HEK293 (cell line): ENCODE measurements at regions of chr6 and their contacts with region 1.

Region 1: DNA sequence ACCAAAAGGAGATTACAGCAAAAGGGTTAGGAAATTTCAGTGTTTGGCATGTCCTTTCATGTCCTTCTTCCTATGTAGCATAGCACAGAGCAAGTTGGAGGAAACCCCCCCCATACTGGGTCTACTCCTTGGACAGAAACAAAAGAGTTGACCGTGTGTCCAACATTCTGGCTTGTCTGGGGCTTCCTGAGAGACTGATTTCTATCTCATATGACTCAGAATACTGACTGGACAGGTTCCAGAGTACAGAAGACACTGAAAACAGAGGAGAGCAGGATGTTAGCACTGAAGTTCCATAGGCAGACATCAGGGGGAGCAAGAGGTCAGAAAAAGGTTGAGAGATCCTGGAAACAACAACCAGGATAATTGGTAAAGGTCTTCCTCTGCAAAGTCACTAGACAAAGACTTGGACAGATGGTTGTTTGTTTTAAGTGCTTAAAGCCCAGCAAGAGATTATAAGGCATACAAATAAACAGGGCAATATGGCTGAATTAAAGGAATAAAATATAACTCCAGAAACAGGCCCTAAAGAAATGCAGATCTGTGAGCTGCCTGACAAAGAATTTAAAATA is 48.4 kb downstream of the USP49 start:
- H3K4me3 ChIP-seq: no peak overlapping the region
- H3K27ac ChIP-seq: peak overlapping the region; percentile 32
- H3K4me1 ChIP-seq: no peaks in the 10 kb centered on the region
- CTCF ChIP-seq: peak; percentile 62

Region 2: DNA sequence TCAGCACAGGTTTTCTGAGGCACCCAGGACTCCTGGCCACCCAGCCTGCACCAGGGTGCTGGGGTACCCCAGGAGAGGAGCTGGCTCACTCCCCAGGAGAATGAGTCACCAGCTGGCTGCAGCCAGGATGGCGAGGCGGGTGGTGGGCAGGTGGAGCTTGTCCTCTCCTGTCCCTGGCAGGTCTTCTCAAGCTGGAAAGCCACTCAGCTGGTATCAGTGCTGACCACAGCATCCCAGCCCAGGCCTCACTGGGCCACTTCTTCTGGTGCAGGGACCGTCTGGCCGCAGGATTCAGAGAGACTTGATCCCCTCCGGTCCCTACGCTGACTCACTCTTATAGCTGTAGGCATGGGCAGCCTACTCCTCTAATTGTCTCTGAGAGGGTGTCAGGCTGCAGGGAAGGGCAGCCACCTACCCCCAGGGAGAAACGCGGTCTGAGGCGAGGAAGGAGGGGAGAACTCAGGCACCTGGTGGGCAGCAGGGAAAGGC is 133.5 kb before region 1 on chr6:
- CTCF ChIA-PET with region 1: no interaction called
- POLR2A ChIA-PET with region 1: no interaction called
- H3K4me3 ChIP-seq: no peak overlapping the region
- H3K27ac ChIP-seq: no peak overlapping the region
- H3K4me1 ChIP-seq: peaks cover 3% of the 10 kb centered on the region; the same call in 1 of the 2 replicates
- CTCF ChIP-seq: no peak

Region 3: DNA sequence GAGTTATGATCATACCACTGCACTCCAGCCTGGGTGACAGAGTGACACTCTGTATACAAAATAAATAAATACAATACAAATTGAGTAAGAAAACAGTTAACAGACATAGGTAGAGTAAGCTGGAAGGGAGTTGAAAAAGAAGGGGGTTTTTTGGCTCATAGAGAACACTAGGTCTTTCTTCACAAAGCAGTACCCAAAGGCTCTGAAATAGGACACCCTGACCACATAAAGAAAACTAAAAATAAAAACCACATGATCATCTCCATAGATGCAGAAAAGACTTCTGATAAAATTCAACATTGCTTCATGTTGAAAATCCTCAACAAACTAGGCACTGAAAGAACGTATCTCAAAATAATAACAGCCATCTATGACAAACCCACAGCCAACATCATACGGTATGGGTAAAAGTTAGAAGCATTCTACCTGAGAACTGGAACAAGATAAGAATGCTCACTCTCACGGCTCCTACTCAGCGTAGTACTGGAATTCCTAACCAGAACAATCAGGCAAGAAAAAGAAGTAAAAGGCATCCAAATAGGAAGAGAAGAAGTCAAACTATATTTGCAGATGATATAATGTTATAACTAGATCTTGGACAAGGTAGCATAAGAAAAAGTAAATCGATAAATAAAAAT is 10.6 kb before region 1 on chr6:
- CTCF ChIA-PET with region 1: interaction called, 13 read pairs
- POLR2A ChIA-PET with region 1: no interaction called
- H3K4me3 ChIP-seq: no peak overlapping the region
- H3K27ac ChIP-seq: no peak overlapping the region
- H3K4me1 ChIP-seq: no peaks in the 10 kb centered on the region
- CTCF ChIP-seq: no peak

Region 4: DNA sequence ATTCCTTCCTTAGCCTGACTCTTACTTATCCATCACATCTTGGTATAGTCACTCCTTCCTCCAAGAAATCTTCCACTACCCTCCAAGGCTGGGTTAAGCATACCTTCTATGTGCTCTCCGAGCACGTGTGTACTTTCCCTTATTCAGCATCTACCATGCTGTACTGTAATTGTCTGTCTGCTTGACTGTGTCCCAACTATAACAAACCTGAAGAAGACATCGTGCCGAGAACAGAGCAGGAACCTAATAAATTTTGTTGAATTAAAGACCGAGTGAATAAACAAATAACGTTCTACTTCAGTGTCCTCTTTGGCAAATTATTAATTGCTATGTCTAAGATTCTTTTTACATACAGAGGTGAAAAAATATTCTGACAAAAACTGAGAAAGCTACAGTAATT is 12.6 kb after region 1 on chr6:
- CTCF ChIA-PET with region 1: interaction called, 14 read pairs
- POLR2A ChIA-PET with region 1: no interaction called
- H3K4me3 ChIP-seq: no peak overlapping the region
- H3K27ac ChIP-seq: no peak overlapping the region
- H3K4me1 ChIP-seq: no peaks in the 10 kb centered on the region
- CTCF ChIP-seq: no peak

Region 5: DNA sequence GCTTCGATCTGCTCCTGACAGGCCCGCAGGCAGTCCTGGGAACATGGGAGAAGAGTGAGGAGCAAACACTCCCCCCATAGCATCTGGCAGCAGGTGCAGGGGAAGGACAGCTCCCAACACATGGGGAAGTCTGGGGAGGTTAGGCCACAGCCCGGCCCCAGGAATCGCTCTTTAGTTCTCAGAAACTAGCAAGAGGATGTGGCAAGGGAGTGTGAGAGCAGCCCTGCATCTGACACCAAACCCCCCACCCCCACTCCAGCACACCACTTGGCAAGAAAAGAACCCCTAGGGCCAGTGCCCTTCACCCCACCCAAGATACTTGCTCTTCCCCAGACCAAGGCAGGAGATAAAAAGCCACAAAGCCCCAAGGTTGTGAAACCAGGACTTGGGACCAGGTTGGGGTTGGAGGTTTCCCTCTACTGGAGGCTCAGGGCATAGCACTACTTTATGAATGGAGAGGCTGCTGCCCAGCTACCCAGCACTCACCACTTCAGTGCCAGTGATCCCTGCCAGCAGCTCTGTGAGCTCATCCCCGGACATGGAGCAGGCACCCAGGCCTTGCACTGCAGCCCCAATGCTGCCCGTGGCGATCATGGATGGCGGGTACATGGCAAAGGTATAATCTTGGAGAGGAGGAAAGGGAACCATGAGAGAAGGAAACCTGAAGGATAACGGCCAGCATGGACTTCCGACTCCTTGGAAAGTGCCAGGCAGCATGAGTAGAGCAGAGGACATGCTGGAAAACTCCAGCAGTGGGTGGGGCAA is 89.5 kb after region 1 on chr6:
- CTCF ChIA-PET with region 1: interaction called, 31 read pairs
- POLR2A ChIA-PET with region 1: no interaction called
- H3K4me3 ChIP-seq: no peak overlapping the region
- H3K27ac ChIP-seq: no peak overlapping the region
- H3K4me1 ChIP-seq: peaks cover 20% of the 10 kb centered on the region
- CTCF ChIP-seq: peak; percentile 56; the same call in 1 of the 2 replicates